GM10248 (cell line): ENCODE measurements at regions of chr3 and their contacts with region 1.

Region 1: DNA sequence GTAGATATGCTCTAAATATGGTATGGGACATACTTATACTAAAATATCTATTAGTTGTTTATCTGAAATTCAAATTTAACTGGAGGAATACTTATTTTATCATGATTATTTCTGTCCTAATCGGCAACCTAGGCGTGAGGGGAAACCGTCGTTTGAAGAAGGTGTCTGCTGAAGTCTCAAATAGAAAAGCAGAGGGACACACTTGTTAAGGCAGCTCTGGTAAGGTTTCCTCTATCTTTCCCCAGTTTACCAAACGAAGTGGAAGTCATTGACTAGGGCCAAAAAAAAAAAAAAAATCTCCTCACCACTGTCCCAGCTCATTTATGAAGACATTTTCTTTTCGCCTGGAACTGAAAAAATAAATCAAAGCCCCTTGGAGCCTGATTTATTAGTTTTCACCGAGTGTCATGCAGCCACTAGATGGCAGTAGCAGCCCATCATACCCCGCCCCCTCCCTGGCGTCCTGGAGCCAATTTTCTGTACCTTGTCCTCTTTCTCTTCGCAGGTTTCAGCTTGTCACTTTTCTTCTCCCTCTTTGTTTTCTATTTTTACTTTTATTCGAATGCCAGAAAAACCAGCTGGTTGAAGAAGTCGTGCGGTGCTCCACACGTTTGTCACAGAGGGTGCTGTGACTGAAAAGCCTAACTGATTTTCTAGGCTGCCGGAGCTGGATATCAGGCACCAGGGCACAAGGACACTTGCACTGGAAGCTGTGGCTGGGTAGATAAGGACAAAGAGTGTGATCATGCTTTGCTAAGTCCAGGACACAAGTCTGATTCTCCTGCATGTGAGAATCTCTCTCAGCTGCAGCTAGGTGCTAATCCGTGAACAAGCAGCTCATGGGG is 238.7 kb downstream of the ZPLD1 start:
- DNase-seq: peak; percentile 56
- CTCF ChIP-seq: peak; percentile 89

Region 2: GRCh38 chr3:102661707-102662497 is 11.6 kb before region 1 on chr3:
- CTCF ChIA-PET with region 1: interaction called, 39 read pairs
- POLR2A ChIA-PET with region 1: no interaction called
- DNase-seq: no peak
- CTCF ChIP-seq: no peak

Region 3: GRCh38 chr3:102688556-102688930 is 15.1 kb after region 1 on chr3:
- CTCF ChIA-PET with region 1: interaction called, 25 read pairs
- POLR2A ChIA-PET with region 1: no interaction called
- DNase-seq: no peak
- CTCF ChIP-seq: no peak

Region 4: GRCh38 chr3:102699819-102700140 is 26.3 kb after region 1 on chr3:
- CTCF ChIA-PET with region 1: interaction called, 19 read pairs
- POLR2A ChIA-PET with region 1: interaction called, 4 read pairs
- DNase-seq: no peak
- CTCF ChIP-seq: no peak

Region 5: GRCh38 chr3:102745882-102746281 is 72.4 kb after region 1 on chr3:
- CTCF ChIA-PET with region 1: interaction called, 63 read pairs
- POLR2A ChIA-PET with region 1: no interaction called
- DNase-seq: no peak
- CTCF ChIP-seq: no peak